ENCODE measurements at regions of chr12 and their contacts with region 1.

Region 1: DNA sequence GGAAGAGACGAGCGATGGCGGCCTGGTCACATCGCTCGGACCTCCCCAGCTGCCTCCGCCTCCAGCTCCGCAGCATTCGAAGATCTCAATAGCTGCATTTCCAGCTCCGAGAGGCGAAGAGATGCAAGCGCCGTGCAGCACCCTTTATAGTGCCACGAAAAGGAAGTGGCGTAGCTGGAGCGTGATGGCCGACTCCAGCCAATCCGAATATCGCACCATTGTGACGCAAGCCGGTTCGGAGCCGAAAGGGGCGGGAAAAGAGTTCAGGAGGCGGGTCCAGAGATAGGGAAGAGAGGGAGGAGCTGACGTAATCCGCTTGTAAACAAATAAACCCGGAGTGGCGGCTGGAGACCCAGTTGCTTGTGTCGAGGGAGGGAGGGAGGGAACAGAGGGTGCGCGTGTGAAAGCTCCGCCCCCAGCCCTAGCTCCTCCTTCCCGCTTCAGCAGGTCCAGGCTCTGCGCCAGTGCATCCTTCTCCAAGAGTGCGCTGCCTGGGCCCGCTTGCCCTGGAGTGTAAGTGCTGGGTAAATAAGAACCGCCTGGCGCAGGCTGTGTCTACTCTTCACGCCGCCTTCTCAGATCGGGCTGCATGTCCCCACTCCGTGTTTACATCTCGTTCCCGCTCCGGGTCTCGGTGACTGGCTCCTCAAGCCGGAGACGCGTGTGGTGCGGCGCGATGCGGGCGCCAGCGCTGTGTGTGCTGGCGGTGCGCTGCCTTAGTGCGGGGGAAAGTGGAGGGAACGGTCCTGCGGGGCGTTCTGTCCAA is at the start of gene BTG1:
- DNase-seq: peak; percentile 96 to 100 (median 98)
- ATAC-seq: peak; percentile 68
- H3K4me3 ChIP-seq: peak within 1 kb of the TSS; percentile 94
- H3K4me3 Mint-ChIP-seq: peak within 1 kb of the TSS; percentile 100
- H3K27ac ChIP-seq: peak within 1 kb of the TSS; percentile 88 to 98
- H3K27ac Mint-ChIP-seq: peak within 1 kb of the TSS; percentile 99
- H3K4me1 ChIP-seq: peaks cover 4% of the 10 kb centered on the region
- H3K4me1 Mint-ChIP-seq: peaks cover 39% of the 10 kb centered on the region
- H3K27me3 ChIP-seq: no peaks in the 10 kb centered on the region
- H3K27me3 Mint-ChIP-seq: peaks cover 15% of the 10 kb centered on the region
- CTCF ChIP-seq: no peak
- total RNA-seq, gene BTG1: 1,698 to 1,774 TPM

Region 2: GRCh38 chr12:91577586-91578539 is 568.1 kb before region 1 on chr12:
- CTCF ChIA-PET with region 1: interaction called, 3 read pairs
- POLR2A ChIA-PET with region 1: interaction called, 15 read pairs
- intact Hi-C with region 1: loop called (anchors 2 to 10 kb)
- DNase-seq: peak in 3 of 14 experiments; percentile 47 to 57 (median 50)
- ATAC-seq: peak; percentile 82
- H3K4me3 ChIP-seq: peak overlapping the region; percentile 47
- H3K4me3 Mint-ChIP-seq: peak overlapping the region; percentile 76
- H3K27ac ChIP-seq: no peak overlapping the region
- H3K27ac Mint-ChIP-seq: peak overlapping the region; percentile 28
- H3K4me1 ChIP-seq: no peaks in the 10 kb centered on the region
- H3K4me1 Mint-ChIP-seq: peaks cover 15% of the 10 kb centered on the region
- H3K27me3 ChIP-seq: no peaks in the 10 kb centered on the region
- H3K27me3 Mint-ChIP-seq: no peaks in the 10 kb centered on the region
- CTCF ChIP-seq: peak; percentile 85

Region 3: GRCh38 chr12:91958816-91959215 is 187.1 kb before region 1 on chr12:
- CTCF ChIA-PET with region 1: no interaction called
- POLR2A ChIA-PET with region 1: no interaction called
- intact Hi-C with region 1: no loop called
- DNase-seq: no peak
- ATAC-seq: no peak
- H3K4me3 ChIP-seq: no peak overlapping the region
- H3K4me3 Mint-ChIP-seq: no peak overlapping the region
- H3K27ac ChIP-seq: no peak overlapping the region
- H3K27ac Mint-ChIP-seq: no peak overlapping the region
- H3K4me1 ChIP-seq: no peaks in the 10 kb centered on the region
- H3K4me1 Mint-ChIP-seq: no peaks in the 10 kb centered on the region
- H3K27me3 ChIP-seq: no peaks in the 10 kb centered on the region
- H3K27me3 Mint-ChIP-seq: no peaks in the 10 kb centered on the region
- CTCF ChIP-seq: no peak

Region 4: DNA sequence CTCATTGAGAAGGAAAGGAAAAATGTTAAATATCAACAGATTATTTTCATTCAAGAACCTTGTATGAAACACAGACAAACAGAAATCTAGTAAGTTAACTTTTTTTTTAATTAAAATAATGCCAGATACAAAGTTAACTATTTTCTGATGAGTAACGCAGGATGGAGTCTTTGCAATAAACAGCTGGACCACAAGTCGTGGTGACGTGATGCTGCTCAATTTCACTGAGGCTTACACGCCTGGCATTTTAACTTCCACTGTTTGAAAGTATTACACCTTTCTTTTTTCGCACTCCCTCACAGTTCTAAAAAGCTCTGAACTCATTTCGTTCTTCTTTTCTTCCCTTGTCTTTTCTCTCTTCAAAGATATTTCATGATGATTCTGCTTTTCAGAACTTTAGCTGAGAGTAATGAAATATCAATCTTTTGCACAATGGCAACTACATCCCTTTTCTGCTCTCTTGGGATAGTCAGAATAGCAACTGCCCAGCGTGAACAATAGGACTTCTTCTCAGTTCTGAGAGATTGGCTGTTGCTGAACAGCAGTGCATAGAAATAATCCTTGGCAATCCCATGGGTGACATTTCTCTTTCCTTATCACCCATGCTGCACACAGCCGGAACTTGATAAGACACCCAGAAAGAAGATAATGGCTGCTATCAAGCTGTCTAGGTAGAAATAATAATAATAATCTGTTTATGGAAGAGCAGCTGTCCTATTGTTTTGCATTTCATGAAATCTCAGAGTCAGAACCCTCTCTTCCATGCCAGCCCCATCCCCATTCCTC is 160.7 kb before region 1 on chr12:
- CTCF ChIA-PET with region 1: no interaction called
- POLR2A ChIA-PET with region 1: interaction called, 112 read pairs
- intact Hi-C with region 1: loop called in 1 of 2 experiments (anchors 2 kb)
- DNase-seq: no peak
- ATAC-seq: no peak
- H3K4me3 ChIP-seq: no peak overlapping the region
- H3K4me3 Mint-ChIP-seq: no peak overlapping the region
- H3K27ac ChIP-seq: no peak overlapping the region
- H3K27ac Mint-ChIP-seq: no peak overlapping the region
- H3K4me1 ChIP-seq: peaks cover 3% of the 10 kb centered on the region
- H3K4me1 Mint-ChIP-seq: peaks cover 73% of the 10 kb centered on the region
- H3K27me3 ChIP-seq: no peaks in the 10 kb centered on the region
- H3K27me3 Mint-ChIP-seq: no peaks in the 10 kb centered on the region
- CTCF ChIP-seq: no peak

Region 5: GRCh38 chr12:92059976-92060375 is 85.9 kb before region 1 on chr12:
- CTCF ChIA-PET with region 1: no interaction called
- POLR2A ChIA-PET with region 1: interaction called, 16 read pairs
- intact Hi-C with region 1: no loop called
- DNase-seq: no peak
- ATAC-seq: no peak
- H3K4me3 ChIP-seq: no peak overlapping the region
- H3K4me3 Mint-ChIP-seq: no peak overlapping the region
- H3K27ac ChIP-seq: no peak overlapping the region
- H3K27ac Mint-ChIP-seq: peak overlapping the region; percentile 90
- H3K4me1 ChIP-seq: peaks cover 27% of the 10 kb centered on the region
- H3K4me1 Mint-ChIP-seq: peaks cover 99% of the 10 kb centered on the region
- H3K27me3 ChIP-seq: no peaks in the 10 kb centered on the region
- H3K27me3 Mint-ChIP-seq: no peaks in the 10 kb centered on the region
- CTCF ChIP-seq: no peak

Region 6: DNA sequence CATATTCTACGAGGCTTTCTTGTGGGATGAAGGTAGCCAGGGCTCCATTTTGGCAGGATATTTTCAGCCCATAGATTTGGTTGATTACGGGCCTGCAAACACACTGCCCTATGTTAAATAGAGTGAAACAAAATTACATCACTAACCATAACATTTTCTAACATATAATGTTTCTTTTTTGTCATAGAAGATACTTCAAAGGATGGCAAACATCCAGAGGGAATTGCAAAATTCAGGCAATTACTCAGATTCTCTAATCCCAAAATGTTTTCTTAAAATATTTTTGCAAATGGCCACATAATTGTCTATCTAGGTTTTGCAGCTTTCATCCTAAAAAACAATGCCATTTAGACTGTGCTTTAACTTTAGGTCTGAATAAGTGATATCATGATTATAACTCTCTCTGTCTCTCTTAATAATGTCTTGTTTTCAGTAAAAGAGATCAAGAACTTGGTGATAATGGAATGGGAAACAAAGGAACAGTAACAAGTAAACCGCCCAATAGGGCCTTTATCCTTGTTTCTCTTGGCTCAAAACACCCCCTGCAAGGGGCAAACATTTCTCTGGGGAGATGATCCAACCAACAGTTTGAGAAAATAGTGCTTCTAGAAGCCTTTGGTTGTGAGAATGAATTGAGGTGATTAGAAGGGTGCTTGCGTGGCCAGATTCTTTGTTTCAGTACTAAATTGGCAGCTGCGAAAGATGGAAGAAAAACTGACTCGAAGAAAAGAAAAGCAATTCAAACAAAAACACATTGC is 54.1 kb after region 1 on chr12:
- CTCF ChIA-PET with region 1: no interaction called
- POLR2A ChIA-PET with region 1: interaction called, 15 read pairs
- intact Hi-C with region 1: no loop called
- DNase-seq: no peak
- ATAC-seq: no peak
- H3K4me3 ChIP-seq: no peak overlapping the region
- H3K4me3 Mint-ChIP-seq: no peak overlapping the region
- H3K27ac ChIP-seq: no peak overlapping the region
- H3K27ac Mint-ChIP-seq: no peak overlapping the region
- H3K4me1 ChIP-seq: no peaks in the 10 kb centered on the region
- H3K4me1 Mint-ChIP-seq: peaks cover 25% of the 10 kb centered on the region
- H3K27me3 ChIP-seq: no peaks in the 10 kb centered on the region
- H3K27me3 Mint-ChIP-seq: no peaks in the 10 kb centered on the region
- CTCF ChIP-seq: no peak

Region 7: GRCh38 chr12:92363295-92364146 is 217.6 kb after region 1 on chr12:
- CTCF ChIA-PET with region 1: no interaction called
- POLR2A ChIA-PET with region 1: interaction called, 86 read pairs
- intact Hi-C with region 1: loop called in 1 of 2 experiments (anchors 1 kb)
- DNase-seq: peak; percentile 20 to 79 (median 51)
- ATAC-seq: peak; percentile 55
- H3K4me3 ChIP-seq: peak overlapping the region; percentile 43
- H3K4me3 Mint-ChIP-seq: peak overlapping the region; percentile 74
- H3K27ac ChIP-seq: peak overlapping the region; percentile 73 to 79
- H3K27ac Mint-ChIP-seq: peak overlapping the region; percentile 90
- H3K4me1 ChIP-seq: peaks cover 29% of the 10 kb centered on the region
- H3K4me1 Mint-ChIP-seq: peaks cover 76% of the 10 kb centered on the region
- H3K27me3 ChIP-seq: no peaks in the 10 kb centered on the region
- H3K27me3 Mint-ChIP-seq: no peaks in the 10 kb centered on the region
- CTCF ChIP-seq: no peak

Region 8: DNA sequence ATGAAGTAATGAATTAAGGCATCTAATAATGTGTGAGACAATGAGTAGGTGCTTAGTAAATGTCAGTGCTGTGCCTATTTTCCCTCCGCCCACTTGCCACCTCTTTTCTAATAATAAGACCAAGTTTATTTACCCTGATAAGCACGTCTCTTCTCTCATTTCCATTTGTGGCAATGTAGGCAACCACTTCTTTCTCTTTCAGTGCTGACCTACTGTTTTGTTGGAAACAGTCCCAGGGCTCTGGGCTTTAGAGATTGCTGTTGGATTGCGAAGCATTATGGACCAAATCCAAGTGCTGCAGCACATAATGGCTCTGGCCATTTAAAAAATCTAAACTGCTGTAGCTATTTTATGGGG is 415.6 kb after region 1 on chr12:
- CTCF ChIA-PET with region 1: no interaction called
- POLR2A ChIA-PET with region 1: interaction called, 21 read pairs
- intact Hi-C with region 1: no loop called
- DNase-seq: no peak
- ATAC-seq: no peak
- H3K4me3 ChIP-seq: no peak overlapping the region
- H3K4me3 Mint-ChIP-seq: no peak overlapping the region
- H3K27ac ChIP-seq: no peak overlapping the region
- H3K27ac Mint-ChIP-seq: no peak overlapping the region
- H3K4me1 ChIP-seq: peaks cover 9% of the 10 kb centered on the region
- H3K4me1 Mint-ChIP-seq: peaks cover 29% of the 10 kb centered on the region
- H3K27me3 ChIP-seq: no peaks in the 10 kb centered on the region
- H3K27me3 Mint-ChIP-seq: no peaks in the 10 kb centered on the region
- CTCF ChIP-seq: no peak